ENCODE measurements at regions of chr1 and their contacts with region 1.

Region 1: DNA sequence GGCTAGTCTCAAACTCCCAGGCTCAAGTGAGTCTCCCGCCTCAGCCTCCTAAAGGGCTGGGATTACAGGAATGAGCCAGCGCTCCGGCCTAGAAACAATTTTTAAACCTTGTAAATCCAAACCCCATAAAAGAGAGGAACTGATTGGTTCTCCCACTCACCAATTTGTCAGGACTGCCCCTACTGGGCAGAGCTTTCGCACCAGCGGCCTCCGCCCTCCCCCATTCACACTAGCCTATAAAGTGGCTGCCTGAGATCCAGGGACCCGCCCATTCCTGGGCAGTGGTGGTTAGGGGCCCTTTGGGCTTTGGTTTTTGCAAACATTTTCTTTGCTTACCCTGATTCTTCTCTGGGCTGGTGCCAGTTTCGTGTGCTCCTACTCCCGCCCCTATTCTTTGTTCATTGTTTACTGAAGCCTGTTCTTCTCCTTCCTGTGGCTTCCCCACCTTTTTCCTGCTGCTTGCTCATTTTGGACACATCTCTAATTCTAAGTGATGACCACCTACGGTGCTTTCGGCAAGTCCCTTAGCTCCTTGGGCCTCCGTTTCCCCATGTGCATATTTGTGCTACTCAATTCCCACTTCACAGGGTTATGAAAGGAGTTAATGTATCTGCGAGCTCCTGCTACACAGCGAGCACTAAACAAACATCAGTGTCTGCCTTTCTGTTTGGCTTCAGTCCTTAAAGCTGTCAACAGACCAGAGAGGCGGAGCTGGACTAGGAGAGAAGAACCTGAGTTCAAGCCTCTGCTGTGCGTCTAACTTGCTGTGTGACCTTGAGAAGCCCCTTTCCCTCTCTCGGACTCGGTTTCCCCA is 39.8 kb upstream of the CLIC4 start:
- DNase-seq: peak; percentile 97
- H3K4me3 ChIP-seq: peak overlapping the region in 1 of 3 experiments; percentile 11
- H3K27ac ChIP-seq: peak overlapping the region; percentile 85
- H3K4me1 ChIP-seq: peaks cover 30% of the 10 kb centered on the region
- H3K27me3 ChIP-seq: no peaks in the 10 kb centered on the region
- CTCF ChIP-seq: no peak

Region 2: DNA sequence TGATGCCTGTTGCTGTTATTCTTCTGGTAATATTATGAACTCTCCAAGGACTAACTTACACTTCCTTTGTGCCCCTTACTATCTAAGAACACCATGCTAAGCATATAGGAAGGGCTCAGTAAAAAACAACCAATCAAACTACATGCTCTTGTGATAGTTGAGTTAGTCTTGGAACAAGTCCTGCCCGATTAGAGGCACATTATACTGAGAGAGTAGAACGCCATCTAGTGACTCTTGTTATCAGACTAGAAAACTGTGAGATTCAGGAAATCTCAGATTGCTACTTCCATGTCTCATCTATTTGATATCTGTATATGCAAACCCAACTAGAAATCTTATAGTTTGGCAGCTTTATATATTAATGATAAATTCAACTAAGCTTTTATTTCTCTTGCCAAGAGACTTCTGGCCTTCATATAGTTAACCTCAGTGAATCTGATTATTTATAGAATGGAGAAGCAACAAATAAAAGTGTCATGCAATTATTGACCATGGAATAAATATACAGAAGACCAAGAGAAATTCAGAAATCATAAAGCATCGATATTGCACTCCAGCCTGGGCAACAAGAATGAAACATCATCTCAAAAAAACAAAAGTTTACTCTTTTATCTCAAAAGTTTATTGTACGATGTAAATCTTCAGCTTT is 70.1 kb before region 1 on chr1:
- CTCF ChIA-PET with region 1: no interaction called
- dilution Hi-C with region 1: no loop called
- in situ Hi-C with region 1: no loop called
- intact Hi-C with region 1: no loop called
- DNase-seq: peak; percentile 61
- H3K4me3 ChIP-seq: no peak overlapping the region
- H3K27ac ChIP-seq: no peak overlapping the region
- H3K4me1 ChIP-seq: no peaks in the 10 kb centered on the region
- H3K27me3 ChIP-seq: no peaks in the 10 kb centered on the region
- CTCF ChIP-seq: peak; percentile 58 to 72

Region 3: DNA sequence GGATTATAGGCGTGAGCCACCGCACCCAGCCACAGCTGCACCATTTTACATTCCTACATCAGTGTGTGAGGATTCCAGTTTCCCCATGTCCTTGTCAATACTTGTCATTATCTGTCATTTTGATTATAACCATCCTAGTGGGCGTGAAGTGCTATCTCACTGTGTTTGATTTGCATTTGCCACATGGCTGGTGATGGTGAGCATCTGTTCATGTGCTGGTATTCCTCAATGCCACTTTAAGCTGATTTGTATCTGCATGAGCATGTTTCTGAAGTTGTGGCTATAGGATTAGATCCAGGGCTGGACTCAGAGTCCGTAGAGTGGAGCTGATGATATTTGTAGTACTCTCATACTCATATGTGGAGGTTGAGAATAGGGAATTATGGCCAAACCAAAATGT is 25.7 kb before region 1 on chr1:
- CTCF ChIA-PET with region 1: no interaction called
- dilution Hi-C with region 1: no loop called
- in situ Hi-C with region 1: no loop called
- intact Hi-C with region 1: no loop called
- DNase-seq: no peak
- H3K4me3 ChIP-seq: no peak overlapping the region
- H3K27ac ChIP-seq: no peak overlapping the region
- H3K4me1 ChIP-seq: peaks cover 30% of the 10 kb centered on the region
- H3K27me3 ChIP-seq: no peaks in the 10 kb centered on the region
- CTCF ChIP-seq: no peak

Region 4: GRCh38 chr1:24754229-24754628 is 48.8 kb after region 1 on chr1:
- CTCF ChIA-PET with region 1: no interaction called
- dilution Hi-C with region 1: loop called (anchors 5 kb)
- in situ Hi-C with region 1: no loop called
- intact Hi-C with region 1: no loop called
- DNase-seq: no peak
- H3K4me3 ChIP-seq: no peak overlapping the region
- H3K27ac ChIP-seq: no peak overlapping the region
- H3K4me1 ChIP-seq: peaks cover 6% of the 10 kb centered on the region
- H3K27me3 ChIP-seq: no peaks in the 10 kb centered on the region
- CTCF ChIP-seq: no peak

Measured in mammary epithelial cell (primary cell).